Panc1 (cell line): ENCODE measurements at regions of chr7 and their contacts with region 1.

Region 1: DNA sequence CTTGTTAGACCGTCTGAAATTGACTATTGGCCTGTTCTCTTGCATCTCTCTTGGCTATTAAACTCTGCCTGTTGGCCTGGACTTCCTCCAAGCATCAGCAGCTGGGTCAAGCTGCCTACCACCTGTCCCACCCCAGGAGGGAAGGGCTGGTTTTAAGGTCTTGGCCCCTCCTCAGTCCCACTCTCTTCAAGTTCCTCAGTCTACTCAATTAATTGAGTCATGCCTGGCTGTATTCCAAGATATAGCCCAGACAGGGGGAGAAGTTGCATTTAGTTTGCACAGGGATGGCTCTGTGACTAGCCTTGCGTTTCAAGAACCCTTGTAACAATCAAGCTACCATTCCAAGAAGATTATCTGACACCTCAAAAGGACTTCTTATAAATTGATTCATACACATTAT is 113.8 kb upstream of the GLI3 start:
- DNase-seq: no peak
- ATAC-seq: no peak
- H3K4me3 ChIP-seq: no peak overlapping the region
- H3K27ac ChIP-seq: no peak overlapping the region
- H3K4me1 ChIP-seq: no peaks in the 10 kb centered on the region
- H3K27me3 ChIP-seq: no peaks in the 10 kb centered on the region
- CTCF ChIP-seq: no peak

Region 2: GRCh38 chr7:42084263-42084662 is 266.5 kb before region 1 on chr7:
- CTCF ChIA-PET with region 1: no interaction called
- POLR2A ChIA-PET with region 1: interaction called, 11 read pairs
- in situ Hi-C with region 1: no loop called
- intact Hi-C with region 1: no loop called
- DNase-seq: no peak
- ATAC-seq: no peak
- H3K4me3 ChIP-seq: no peak overlapping the region
- H3K27ac ChIP-seq: no peak overlapping the region
- H3K4me1 ChIP-seq: no peaks in the 10 kb centered on the region
- H3K27me3 ChIP-seq: no peaks in the 10 kb centered on the region
- CTCF ChIP-seq: no peak

Region 3: GRCh38 chr7:42192851-42193461 is 157.8 kb before region 1 on chr7:
- CTCF ChIA-PET with region 1: no interaction called
- POLR2A ChIA-PET with region 1: no interaction called
- in situ Hi-C with region 1: no loop called
- intact Hi-C with region 1: no loop called
- DNase-seq: no peak
- ATAC-seq: peak; percentile 30; the same call in 1 of the 2 replicates
- H3K4me3 ChIP-seq: no peak overlapping the region
- H3K27ac ChIP-seq: no peak overlapping the region
- H3K4me1 ChIP-seq: no peaks in the 10 kb centered on the region
- H3K27me3 ChIP-seq: no peaks in the 10 kb centered on the region
- CTCF ChIP-seq: no peak